H1 (cell line): ENCODE measurements at regions of chr4 and their contacts with region 1.

Region 1: DNA sequence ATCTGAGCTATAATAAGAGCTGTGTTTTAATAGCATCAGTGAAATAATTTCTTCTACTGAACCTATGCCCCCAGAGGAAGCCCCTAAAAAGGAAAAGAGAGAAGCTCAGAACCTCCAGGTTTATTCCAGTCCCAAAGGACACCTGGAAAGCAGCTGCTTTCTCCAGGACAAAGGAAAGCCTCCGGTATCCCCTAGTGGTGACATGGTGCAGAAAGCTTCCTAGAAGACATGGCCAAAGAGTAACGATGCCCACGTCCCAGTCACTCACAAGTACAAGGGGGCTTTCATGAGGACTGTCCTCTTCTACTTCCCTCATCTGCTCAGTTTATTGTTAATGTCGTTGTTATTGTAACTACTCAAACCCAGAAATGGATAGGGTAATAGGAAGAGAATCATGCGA is 343.9 kb downstream of the UNC5C start:
- DNase-seq: no peak
- H3K4me3 ChIP-seq: no peak overlapping the region
- H3K27ac ChIP-seq: no peak overlapping the region
- H3K4me1 ChIP-seq: peaks cover 0 to 3% (median 0%) of the 10 kb centered on the region in 4 experiments; a peak in 1 of 7 replicates
- H3K27me3 ChIP-seq: no peaks in the 10 kb centered on the region
- CTCF ChIP-seq: peak; percentile 18 to 64 (median 59)
- EP300 ChIP-seq: no peak
- POLR2A ChIP-seq: no peak
- RAD21 ChIP-seq: peak; percentile 68 to 70

Region 2: DNA sequence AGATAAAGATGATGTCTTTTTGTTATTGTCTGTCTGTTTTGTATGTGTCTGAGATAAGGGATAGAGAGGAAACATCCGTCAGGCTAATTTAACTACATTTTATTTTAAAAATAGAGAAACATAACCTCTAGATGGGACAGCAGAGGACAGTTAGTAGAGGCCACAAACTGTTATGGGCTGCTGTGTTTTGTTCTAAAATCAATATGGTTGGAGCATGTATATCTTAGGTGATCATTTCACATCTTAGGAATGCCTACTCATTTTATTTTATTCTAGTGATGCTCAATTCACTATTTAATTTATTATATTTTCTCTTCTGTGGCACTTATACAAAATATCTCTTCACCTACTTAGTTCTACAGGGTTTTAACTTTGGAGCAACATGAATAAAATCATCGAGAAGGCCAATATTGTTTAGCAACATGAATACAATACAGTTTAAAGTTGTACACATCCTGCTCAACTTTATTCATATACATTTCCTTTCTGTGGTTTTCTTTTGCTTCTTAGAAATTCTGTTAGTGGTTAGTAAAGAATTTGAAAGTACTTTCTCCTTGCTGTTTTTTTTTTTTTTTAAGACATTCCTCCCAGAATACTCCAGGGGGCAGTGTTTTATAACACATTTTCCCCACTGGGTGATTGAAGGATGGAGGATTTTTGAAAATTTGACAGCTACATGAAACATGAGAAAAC is 49.0 kb before region 1 on chr4:
- CTCF ChIA-PET with region 1: interaction called, 13 read pairs
- POLR2A ChIA-PET with region 1: no interaction called
- DNase-seq: no peak
- H3K4me3 ChIP-seq: no peak overlapping the region
- H3K27ac ChIP-seq: no peak overlapping the region
- H3K4me1 ChIP-seq: peaks cover 0 to 3% (median 1%) of the 10 kb centered on the region in 4 experiments; a peak in 4 of 7 replicates
- H3K27me3 ChIP-seq: no peaks in the 10 kb centered on the region
- CTCF ChIP-seq: peak in 2 of 3 experiments; percentile 39 to 51; a peak in 2 of 4 replicates
- EP300 ChIP-seq: no peak
- POLR2A ChIP-seq: no peak
- RAD21 ChIP-seq: peak; percentile 64 to 65

Region 3: DNA sequence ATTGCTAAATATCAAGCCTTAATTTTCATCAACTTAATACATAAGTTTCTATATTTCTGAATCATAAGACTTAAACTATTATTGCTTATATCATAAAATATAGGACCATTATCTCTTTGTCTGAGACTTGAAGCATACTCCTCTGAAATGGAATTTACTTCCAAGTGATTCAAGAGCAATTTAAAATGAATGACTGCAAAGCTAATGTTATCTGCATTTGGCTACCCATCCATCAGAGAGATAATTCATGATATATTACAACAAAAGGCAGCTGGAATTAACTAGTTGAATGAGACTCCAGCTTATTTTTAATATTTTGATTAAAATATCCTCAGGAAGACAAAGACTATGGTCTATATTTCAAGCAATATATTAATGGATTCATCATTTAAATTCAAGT is 135.3 kb after region 1 on chr4:
- CTCF ChIA-PET with region 1: no interaction called
- POLR2A ChIA-PET with region 1: no interaction called
- DNase-seq: no peak
- H3K4me3 ChIP-seq: no peak overlapping the region
- H3K27ac ChIP-seq: no peak overlapping the region
- H3K4me1 ChIP-seq: no peaks in the 10 kb centered on the region
- H3K27me3 ChIP-seq: no peaks in the 10 kb centered on the region
- CTCF ChIP-seq: no peak
- EP300 ChIP-seq: no peak
- POLR2A ChIP-seq: no peak
- RAD21 ChIP-seq: no peak